Activated T-helper 1 cell treated with anti-CD3 and anti-CD28 coated beads, Interleukin-12 subunit alpha, Interleukin-12 subunit beta, Interleukin-2, Interleukin-4 antibody, amounts not matched to agents 30 ng/mL and 10 ng/mL and 1 ng/mL, durations not matched to agents 14 hours and 24 hours and 36 hours (primary cell): ENCODE measurements at regions of chr2 and their contacts with region 1.

Region 1: GRCh38 chr2:166127217-166128155 is at the start of gene SCN1A:
- DNase-seq: no peak
- H3K4me3 Mint-ChIP-seq: no peak within 1 kb of the TSS
- H3K27ac Mint-ChIP-seq: no peak within 1 kb of the TSS
- H3K4me1 Mint-ChIP-seq: no peaks in the 10 kb centered on the region
- H3K27me3 Mint-ChIP-seq: peaks cover 9% of the 10 kb centered on the region
- total RNA-seq, gene SCN1A: not detected in 2 replicates

Region 2: GRCh38 chr2:165401285-165401852 is 726.1 kb before region 1 on chr2:
- intact Hi-C with region 1: loop called (anchors 1 kb)
- DNase-seq: no peak
- H3K4me3 Mint-ChIP-seq: no peak overlapping the region
- H3K27ac Mint-ChIP-seq: no peak overlapping the region
- H3K4me1 Mint-ChIP-seq: no peaks in the 10 kb centered on the region
- H3K27me3 Mint-ChIP-seq: peaks cover 27% of the 10 kb centered on the region

Region 3: GRCh38 chr2:165874445-165875039 is 252.9 kb before region 1 on chr2:
- intact Hi-C with region 1: loop called (anchors 10 kb)
- DNase-seq: peak; percentile 9
- H3K4me3 Mint-ChIP-seq: no peak overlapping the region
- H3K27ac Mint-ChIP-seq: no peak overlapping the region
- H3K4me1 Mint-ChIP-seq: peaks cover 34% of the 10 kb centered on the region
- H3K27me3 Mint-ChIP-seq: no peaks in the 10 kb centered on the region

Region 4: GRCh38 chr2:166057370-166058164 is 69.9 kb before region 1 on chr2:
- intact Hi-C with region 1: loop called (anchors 1 kb)
- DNase-seq: no peak
- H3K4me3 Mint-ChIP-seq: no peak overlapping the region
- H3K27ac Mint-ChIP-seq: no peak overlapping the region
- H3K4me1 Mint-ChIP-seq: no peaks in the 10 kb centered on the region
- H3K27me3 Mint-ChIP-seq: peaks cover 3% of the 10 kb centered on the region

Region 5: DNA sequence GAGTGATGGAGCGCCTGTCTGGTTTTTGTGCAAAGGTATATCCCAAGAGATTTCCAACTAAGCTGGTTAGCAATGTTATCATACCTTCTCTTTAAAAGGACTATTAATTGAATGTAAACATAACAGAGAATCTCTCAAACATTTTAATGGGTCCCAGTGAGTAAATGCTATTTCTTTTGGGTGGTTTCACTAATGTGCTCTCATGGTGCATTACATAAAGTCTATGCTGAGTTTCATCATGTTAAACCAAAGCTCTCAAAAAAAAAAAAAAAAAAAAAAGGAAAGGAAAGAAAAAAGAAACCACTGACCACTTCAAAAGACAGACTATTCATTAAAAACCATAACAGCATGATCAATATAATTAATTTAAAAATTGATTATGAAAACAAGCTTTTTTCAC is 119.4 kb after region 1 on chr2:
- intact Hi-C with region 1: no loop called
- DNase-seq: no peak
- H3K4me3 Mint-ChIP-seq: no peak overlapping the region
- H3K27ac Mint-ChIP-seq: no peak overlapping the region
- H3K4me1 Mint-ChIP-seq: no peaks in the 10 kb centered on the region
- H3K27me3 Mint-ChIP-seq: no peaks in the 10 kb centered on the region